ENCODE measurements at regions of chr17 and their contacts with region 1.

Region 1: GRCh38 chr17:59106463-59107305 is at the start of gene TRIM37:
- DNase-seq: peak; percentile 98
- H3K4me3 Mint-ChIP-seq: peak within 1 kb of the TSS; percentile 82
- H3K27ac Mint-ChIP-seq: peak within 1 kb of the TSS; percentile 95
- H3K4me1 Mint-ChIP-seq: peaks cover 11% of the 10 kb centered on the region
- H3K27me3 Mint-ChIP-seq: no peaks in the 10 kb centered on the region
- CTCF ChIP-seq: no peak
- total RNA-seq, gene TRIM37: 38.9 and 39.8 TPM in 2 replicates

Region 2: GRCh38 chr17:59004338-59005111 is 102.2 kb before region 1 on chr17:
- CTCF ChIA-PET with region 1: no interaction called
- POLR2A ChIA-PET with region 1: no interaction called
- intact Hi-C with region 1: no loop called
- DNase-seq: peak; percentile 75
- H3K4me3 Mint-ChIP-seq: no peak overlapping the region
- H3K27ac Mint-ChIP-seq: peak overlapping the region; percentile 19
- H3K4me1 Mint-ChIP-seq: no peaks in the 10 kb centered on the region
- H3K27me3 Mint-ChIP-seq: no peaks in the 10 kb centered on the region
- CTCF ChIP-seq: peak; percentile 95

Region 3: GRCh38 chr17:59093702-59094231 is 12.9 kb before region 1 on chr17:
- CTCF ChIA-PET with region 1: interaction called, 4 read pairs
- POLR2A ChIA-PET with region 1: interaction called, 60 read pairs
- intact Hi-C with region 1: no loop called
- DNase-seq: peak; percentile 87
- H3K4me3 Mint-ChIP-seq: peak overlapping the region; percentile 45
- H3K27ac Mint-ChIP-seq: peak overlapping the region; percentile 78
- H3K4me1 Mint-ChIP-seq: peaks cover 21% of the 10 kb centered on the region
- H3K27me3 Mint-ChIP-seq: no peaks in the 10 kb centered on the region
- CTCF ChIP-seq: no peak

Region 4: GRCh38 chr17:59121850-59122480 is 15.3 kb after region 1 on chr17:
- CTCF ChIA-PET with region 1: interaction called, 5 read pairs
- POLR2A ChIA-PET with region 1: interaction called, 19 read pairs
- intact Hi-C with region 1: no loop called
- DNase-seq: no peak
- H3K4me3 Mint-ChIP-seq: no peak overlapping the region
- H3K27ac Mint-ChIP-seq: peak overlapping the region; percentile 51
- H3K4me1 Mint-ChIP-seq: no peaks in the 10 kb centered on the region
- H3K27me3 Mint-ChIP-seq: no peaks in the 10 kb centered on the region
- CTCF ChIP-seq: no peak

Region 5: DNA sequence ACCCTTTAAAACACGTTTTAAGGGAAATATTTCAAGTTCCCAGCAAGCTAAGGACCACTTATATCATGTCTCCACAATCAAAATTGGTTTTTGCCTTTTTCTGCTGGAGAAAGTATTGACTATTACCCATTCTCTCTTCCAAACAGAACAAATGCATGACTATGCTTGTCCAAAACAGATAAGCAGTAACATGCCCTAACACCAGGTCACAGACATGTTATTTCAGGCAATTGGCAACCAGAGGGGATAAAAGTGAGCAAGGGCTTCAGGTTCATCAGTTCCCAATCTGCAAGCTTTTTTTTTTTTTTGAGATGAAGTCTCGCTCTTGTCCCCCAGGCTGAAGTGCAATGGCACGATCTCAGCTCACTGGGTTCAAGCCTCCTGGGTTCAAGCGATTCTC is 33.3 kb after region 1 on chr17:
- CTCF ChIA-PET with region 1: no interaction called
- POLR2A ChIA-PET with region 1: interaction called, 12 read pairs
- intact Hi-C with region 1: no loop called
- DNase-seq: no peak
- H3K4me3 Mint-ChIP-seq: no peak overlapping the region
- H3K27ac Mint-ChIP-seq: peak overlapping the region; percentile 27
- H3K4me1 Mint-ChIP-seq: no peaks in the 10 kb centered on the region
- H3K27me3 Mint-ChIP-seq: no peaks in the 10 kb centered on the region
- CTCF ChIP-seq: no peak

Region 6: DNA sequence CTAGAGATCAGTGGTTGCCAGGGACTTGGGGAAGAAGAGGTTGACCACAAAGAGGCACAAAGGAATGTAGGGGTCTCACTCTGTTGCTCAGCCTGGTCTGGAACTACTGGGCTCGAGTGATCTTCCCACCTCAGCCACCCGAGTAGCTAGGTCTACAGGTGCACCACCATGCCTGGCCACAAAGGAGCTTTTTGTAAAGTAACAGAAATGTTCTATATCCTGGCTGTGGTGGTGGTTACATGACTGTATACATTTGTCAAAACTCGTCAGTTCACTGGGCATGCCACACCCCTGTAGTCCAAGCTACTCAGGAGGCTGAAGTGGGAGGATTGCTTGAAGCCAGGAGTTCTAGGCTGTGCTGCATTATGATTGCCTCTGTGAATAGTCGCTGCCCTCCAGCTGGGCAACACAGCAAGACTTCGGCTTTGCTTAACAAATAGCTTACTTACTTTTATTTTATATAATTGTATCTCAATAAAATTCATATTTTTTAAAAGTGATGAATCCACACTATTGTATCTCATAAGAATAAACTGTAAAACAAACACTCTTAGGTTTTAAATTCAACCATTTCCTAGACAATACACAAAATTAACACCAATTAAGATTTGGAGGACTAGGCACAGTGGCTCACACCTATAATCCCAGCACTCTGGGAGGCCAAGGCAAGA is 43.3 kb after region 1 on chr17:
- CTCF ChIA-PET with region 1: interaction called, 3 read pairs
- POLR2A ChIA-PET with region 1: interaction called, 56 read pairs
- intact Hi-C with region 1: loop called (anchors 2 kb)
- DNase-seq: no peak
- H3K4me3 Mint-ChIP-seq: no peak overlapping the region
- H3K27ac Mint-ChIP-seq: peak overlapping the region; percentile 44
- H3K4me1 Mint-ChIP-seq: peaks cover 33% of the 10 kb centered on the region
- H3K27me3 Mint-ChIP-seq: no peaks in the 10 kb centered on the region
- CTCF ChIP-seq: no peak

Region 7: DNA sequence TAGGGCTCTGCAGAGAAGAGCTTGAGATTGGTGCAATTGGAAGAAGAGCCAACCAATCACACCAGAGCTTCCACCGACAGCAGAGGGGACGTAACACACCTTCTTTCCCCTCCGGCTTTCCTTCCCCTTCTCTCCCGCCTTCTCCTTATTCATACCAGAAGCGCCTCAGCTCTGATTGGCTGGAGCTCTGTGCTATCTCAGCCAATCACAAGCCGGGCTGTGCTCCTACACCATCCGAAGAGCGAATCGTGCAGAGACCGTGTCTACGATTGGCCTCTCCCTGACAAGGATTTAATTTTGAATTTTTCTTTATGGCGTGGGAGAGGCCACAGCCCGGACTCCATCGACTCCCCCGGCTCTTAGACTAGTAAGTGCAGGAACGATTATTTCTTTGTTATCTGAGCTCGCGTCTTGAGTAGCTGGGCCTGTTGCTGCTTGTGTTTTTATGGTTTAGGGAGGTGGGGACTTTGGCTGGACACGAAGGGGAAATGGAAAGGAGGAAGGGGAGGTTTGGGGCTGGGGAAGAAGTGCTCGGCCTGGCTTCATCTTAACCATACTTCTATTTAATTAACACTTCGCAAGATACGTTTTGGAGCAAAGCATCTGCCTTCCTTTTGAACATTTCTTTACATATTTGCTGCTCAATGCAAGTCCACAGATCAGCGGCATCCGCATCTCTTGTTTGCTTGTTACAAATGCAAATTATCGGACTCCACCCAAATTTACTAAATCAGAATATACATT is 48.9 kb after region 1 on chr17 and contains the start of gene PRR11:
- CTCF ChIA-PET with region 1: interaction called, 3 read pairs
- POLR2A ChIA-PET with region 1: interaction called, 56 read pairs
- intact Hi-C with region 1: loop called (anchors 2 kb)
- DNase-seq: peak; percentile 100
- H3K4me3 Mint-ChIP-seq: no peak within 1 kb of the TSS
- H3K27ac Mint-ChIP-seq: no peak within 1 kb of the TSS
- H3K4me1 Mint-ChIP-seq: peaks cover 49% of the 10 kb centered on the region
- H3K27me3 Mint-ChIP-seq: no peaks in the 10 kb centered on the region
- CTCF ChIP-seq: no peak
- total RNA-seq, gene PRR11: 35.7 and 48.5 TPM in 2 replicates

Region 8: DNA sequence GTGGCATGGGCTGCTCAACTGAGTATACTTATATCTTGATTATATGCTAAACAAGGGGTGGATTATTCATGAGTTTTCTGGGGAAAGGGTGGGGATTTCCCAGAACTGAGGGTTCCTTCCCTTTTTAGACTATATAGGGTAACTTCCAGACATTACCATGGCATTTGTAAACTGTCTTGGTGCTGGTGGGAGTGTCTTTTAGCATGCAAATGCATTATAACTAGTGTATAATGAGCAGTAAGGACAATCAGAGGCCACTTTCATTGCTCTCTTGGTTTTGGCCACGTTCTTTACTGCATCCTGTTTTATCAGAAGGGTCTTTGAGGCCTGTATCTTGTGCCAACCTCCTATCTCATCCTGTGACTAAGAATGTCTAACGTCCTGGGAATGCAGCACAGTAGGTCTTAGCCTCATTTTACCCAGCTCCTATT is 60.9 kb after region 1 on chr17:
- CTCF ChIA-PET with region 1: no interaction called
- POLR2A ChIA-PET with region 1: no interaction called
- intact Hi-C with region 1: no loop called
- DNase-seq: no peak
- H3K4me3 Mint-ChIP-seq: no peak overlapping the region
- H3K27ac Mint-ChIP-seq: peak overlapping the region; percentile 49
- H3K4me1 Mint-ChIP-seq: peaks cover 5% of the 10 kb centered on the region
- H3K27me3 Mint-ChIP-seq: no peaks in the 10 kb centered on the region
- CTCF ChIP-seq: no peak

Region 9: DNA sequence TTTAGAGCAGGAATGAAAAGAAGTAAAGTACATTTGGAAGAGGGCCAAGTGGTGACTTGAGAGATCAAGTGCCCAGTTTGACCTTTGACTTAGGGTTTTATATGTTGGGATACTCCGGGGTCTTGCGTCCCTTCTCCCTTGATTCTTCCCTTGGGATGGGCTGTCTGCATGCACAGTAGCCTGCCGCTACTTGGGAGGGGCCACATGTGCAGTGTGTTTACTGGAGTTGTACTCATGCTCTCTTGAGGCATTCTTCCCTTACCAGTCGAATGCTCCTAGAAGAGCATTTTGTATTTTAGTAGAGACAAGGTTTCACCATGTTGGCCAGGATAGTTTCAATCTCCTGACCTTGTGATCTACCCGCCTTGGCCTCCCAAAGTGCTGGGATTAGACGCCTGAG is 137.4 kb after region 1 on chr17:
- CTCF ChIA-PET with region 1: no interaction called
- POLR2A ChIA-PET with region 1: no interaction called
- intact Hi-C with region 1: no loop called
- DNase-seq: no peak
- H3K4me3 Mint-ChIP-seq: no peak overlapping the region
- H3K27ac Mint-ChIP-seq: no peak overlapping the region
- H3K4me1 Mint-ChIP-seq: no peaks in the 10 kb centered on the region
- H3K27me3 Mint-ChIP-seq: no peaks in the 10 kb centered on the region
- CTCF ChIP-seq: no peak